CD8-positive, alpha-beta T cell (primary cell): ENCODE measurements at regions of chr1 and their contacts with region 1.

Region 1: DNA sequence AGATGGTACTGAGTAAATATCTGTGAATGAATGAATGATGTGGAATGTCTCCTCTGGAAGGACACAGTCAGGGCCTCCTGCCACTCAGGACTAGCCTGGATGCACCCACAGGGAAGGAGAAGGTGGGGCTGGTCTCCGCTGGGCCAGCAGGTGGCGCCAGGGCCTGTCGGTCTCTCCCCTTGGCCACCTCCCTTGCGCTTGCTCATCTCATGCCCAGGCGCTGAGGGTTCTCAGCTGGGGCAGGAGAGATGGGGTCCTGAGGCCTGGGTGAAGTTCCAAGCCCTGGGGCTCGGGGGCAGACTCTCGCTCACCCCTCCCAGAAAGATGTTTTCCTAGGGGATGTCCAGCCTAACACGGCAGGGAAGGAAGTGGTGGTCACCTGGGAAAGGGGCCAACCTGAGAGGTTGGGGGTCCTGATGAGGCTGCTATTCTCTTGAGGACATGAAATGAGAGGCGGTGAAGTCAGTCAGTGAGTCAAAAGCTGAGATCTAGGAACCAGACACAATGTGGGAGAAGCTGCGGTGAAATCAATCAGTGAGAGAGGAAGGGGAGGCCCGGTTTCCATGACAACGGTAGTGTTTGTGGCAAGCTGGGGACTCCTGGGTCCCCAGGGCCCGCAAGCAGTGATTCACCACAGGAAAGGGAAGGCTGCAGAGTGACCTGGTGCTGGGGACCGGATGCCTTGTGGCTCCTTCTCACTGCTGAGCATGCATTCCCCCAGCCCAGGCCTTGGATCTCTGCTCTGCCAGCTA is 14.6 kb upstream of the MEX3A start:
- DNase-seq: peak; percentile 72 to 97 (median 87)
- ATAC-seq: peak; percentile 82
- H3K4me3 ChIP-seq: peak overlapping the region in 1 of 2 experiments; percentile 7
- H3K4me3 Mint-ChIP-seq: peak overlapping the region; percentile 46
- H3K27ac ChIP-seq: peak overlapping the region; percentile 48 to 87
- H3K27ac Mint-ChIP-seq: peak overlapping the region; percentile 89
- H3K4me1 ChIP-seq: peaks cover 22% of the 10 kb centered on the region
- H3K4me1 Mint-ChIP-seq: peaks cover 26% of the 10 kb centered on the region
- H3K27me3 ChIP-seq: no peaks in the 10 kb centered on the region
- H3K27me3 Mint-ChIP-seq: peaks cover 2% of the 10 kb centered on the region
- CTCF ChIP-seq: peak; percentile 93

Region 2: GRCh38 chr1:156054500-156055280 is 42.1 kb before region 1 on chr1 and contains the start of gene LAMTOR2:
- CTCF ChIA-PET with region 1: no interaction called
- POLR2A ChIA-PET with region 1: no interaction called
- intact Hi-C with region 1: no loop called
- DNase-seq: peak; percentile 90 to 98 (median 94)
- ATAC-seq: peak; percentile 78
- H3K4me3 ChIP-seq: peak within 1 kb of the TSS; percentile 85 to 96
- H3K4me3 Mint-ChIP-seq: peak within 1 kb of the TSS; percentile 92
- H3K27ac ChIP-seq: peak within 1 kb of the TSS; percentile 54 to 79
- H3K27ac Mint-ChIP-seq: peak within 1 kb of the TSS; percentile 84
- H3K4me1 ChIP-seq: peaks cover 11% of the 10 kb centered on the region
- H3K4me1 Mint-ChIP-seq: peaks cover 31% of the 10 kb centered on the region
- H3K27me3 ChIP-seq: no peaks in the 10 kb centered on the region
- H3K27me3 Mint-ChIP-seq: no peaks in the 10 kb centered on the region
- CTCF ChIP-seq: no peak
- total RNA-seq, gene LAMTOR2: 6.7 to 8.3 TPM

Region 3: GRCh38 chr1:156075162-156075561 is 21.7 kb before region 1 on chr1:
- CTCF ChIA-PET with region 1: interaction called, 11 read pairs
- POLR2A ChIA-PET with region 1: no interaction called
- intact Hi-C with region 1: no loop called
- DNase-seq: no peak
- ATAC-seq: no peak
- H3K4me3 ChIP-seq: no peak overlapping the region
- H3K4me3 Mint-ChIP-seq: no peak overlapping the region
- H3K27ac ChIP-seq: no peak overlapping the region
- H3K27ac Mint-ChIP-seq: no peak overlapping the region
- H3K4me1 ChIP-seq: no peaks in the 10 kb centered on the region
- H3K4me1 Mint-ChIP-seq: peaks cover 3% of the 10 kb centered on the region
- H3K27me3 ChIP-seq: no peaks in the 10 kb centered on the region
- H3K27me3 Mint-ChIP-seq: no peaks in the 10 kb centered on the region
- CTCF ChIP-seq: no peak

Region 4: DNA sequence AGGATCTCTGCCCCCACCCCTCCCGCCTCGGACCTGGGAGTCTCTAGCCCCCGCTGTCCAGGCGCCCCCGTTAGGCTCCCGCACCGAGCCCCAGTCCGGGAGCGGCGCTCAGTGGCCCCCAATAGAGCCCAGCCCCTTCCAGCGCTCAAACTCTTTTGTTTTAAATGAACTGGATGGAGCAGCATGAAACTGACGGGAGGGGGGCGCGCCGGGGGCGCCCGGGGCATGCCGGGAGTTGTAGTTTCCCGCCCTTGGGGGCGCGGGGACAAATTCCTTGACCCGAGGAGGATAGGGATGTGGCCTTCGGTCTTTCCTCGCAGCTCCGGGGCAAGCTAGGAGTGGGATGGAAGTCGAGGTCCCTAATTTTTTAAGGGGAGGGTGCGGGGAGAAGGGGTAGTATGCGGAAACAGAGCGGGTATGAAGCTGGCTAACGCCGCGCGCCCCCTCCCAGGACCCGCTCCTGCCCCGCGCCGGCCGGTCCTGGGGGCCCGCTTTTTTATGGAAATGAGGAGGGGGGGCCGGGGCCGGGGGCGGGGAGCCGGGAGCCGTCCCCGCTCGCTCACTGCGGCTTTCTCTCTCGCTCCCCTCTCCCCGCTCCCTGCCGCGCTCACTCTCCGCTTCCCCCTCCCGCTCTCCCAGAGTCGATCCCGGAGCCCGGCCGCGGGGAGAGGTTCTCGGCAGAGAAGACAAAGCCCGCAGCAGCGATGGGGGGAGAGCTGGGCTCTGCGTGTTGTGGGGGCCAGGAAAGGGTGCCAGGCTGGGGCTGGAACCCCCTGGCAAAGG is 14.3 kb before region 1 on chr1 and contains the start of gene MEX3A:
- CTCF ChIA-PET with region 1: interaction called, 19 read pairs
- POLR2A ChIA-PET with region 1: no interaction called
- intact Hi-C with region 1: no loop called
- DNase-seq: peak in 8 of 9 experiments; percentile 39 to 73 (median 64)
- ATAC-seq: peak; percentile 90
- H3K4me3 ChIP-seq: peak within 1 kb of the TSS; percentile 65 to 88
- H3K4me3 Mint-ChIP-seq: peak within 1 kb of the TSS; percentile 87
- H3K27ac ChIP-seq: no peak within 1 kb of the TSS
- H3K27ac Mint-ChIP-seq: no peak within 1 kb of the TSS
- H3K4me1 ChIP-seq: peaks cover 13% of the 10 kb centered on the region
- H3K4me1 Mint-ChIP-seq: peaks cover 7% of the 10 kb centered on the region
- H3K27me3 ChIP-seq: peaks cover 3 to 25% of the 10 kb centered on the region in 2 experiments
- H3K27me3 Mint-ChIP-seq: peaks cover 29% of the 10 kb centered on the region
- CTCF ChIP-seq: no peak
- total RNA-seq, gene MEX3A: 0.14 to 0.22 TPM

Region 5: DNA sequence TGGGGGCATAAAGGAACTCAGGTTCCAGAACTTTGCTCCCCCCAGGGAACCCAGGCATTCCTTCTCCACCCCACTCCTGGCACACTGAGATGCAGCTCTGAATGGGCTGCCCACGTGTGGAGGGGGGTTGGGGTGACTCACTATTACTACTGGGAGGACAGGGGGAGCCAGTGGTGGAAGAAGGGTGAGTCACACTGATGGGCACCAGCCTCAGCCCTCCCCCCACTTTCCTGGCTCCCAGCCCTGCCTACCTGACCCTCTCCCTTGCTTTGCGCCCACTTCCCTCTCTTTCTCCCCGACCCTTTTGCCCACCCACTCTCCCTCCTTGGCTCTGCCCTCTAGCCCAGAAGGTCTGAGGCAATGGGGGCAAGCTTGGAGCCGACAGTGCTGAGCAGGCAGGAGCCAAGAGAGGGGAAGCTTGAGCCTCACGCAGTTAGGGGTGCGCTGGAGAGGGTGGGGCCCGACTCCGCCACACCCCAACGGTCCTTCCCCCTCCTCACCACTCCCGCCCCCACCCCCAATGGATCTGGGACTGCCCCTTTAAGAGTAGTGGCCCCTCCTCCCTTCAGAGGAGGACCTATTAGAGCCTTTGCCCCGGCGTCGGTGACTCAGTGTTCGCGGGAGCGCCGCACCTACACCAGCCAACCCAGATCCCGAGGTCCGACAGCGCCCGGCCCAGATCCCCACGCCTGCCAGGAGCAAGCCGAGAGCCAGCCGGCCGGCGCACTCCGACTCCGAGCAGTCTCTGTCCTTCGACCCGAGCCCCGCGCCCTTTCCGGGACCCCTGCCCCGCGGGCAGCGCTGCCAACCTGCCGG is 17.5 kb after region 1 on chr1 and contains the start of gene LMNA:
- CTCF ChIA-PET with region 1: interaction called, 1,057 read pairs
- POLR2A ChIA-PET with region 1: interaction called, 6 read pairs
- intact Hi-C with region 1: no loop called
- DNase-seq: peak; percentile 40 to 90 (median 77)
- ATAC-seq: peak; percentile 80
- H3K4me3 ChIP-seq: peak within 1 kb of the TSS; percentile 60 to 83
- H3K4me3 Mint-ChIP-seq: peak within 1 kb of the TSS; percentile 93
- H3K27ac ChIP-seq: peak within 1 kb of the TSS; percentile 7 to 68
- H3K27ac Mint-ChIP-seq: peak within 1 kb of the TSS; percentile 88
- H3K4me1 ChIP-seq: peaks cover 22% of the 10 kb centered on the region
- H3K4me1 Mint-ChIP-seq: peaks cover 26% of the 10 kb centered on the region
- H3K27me3 ChIP-seq: peaks cover 16 to 18% of the 10 kb centered on the region in 2 experiments
- H3K27me3 Mint-ChIP-seq: peaks cover 26% of the 10 kb centered on the region
- CTCF ChIP-seq: no peak
- total RNA-seq, gene LMNA: 281 to 298 TPM

Region 6: DNA sequence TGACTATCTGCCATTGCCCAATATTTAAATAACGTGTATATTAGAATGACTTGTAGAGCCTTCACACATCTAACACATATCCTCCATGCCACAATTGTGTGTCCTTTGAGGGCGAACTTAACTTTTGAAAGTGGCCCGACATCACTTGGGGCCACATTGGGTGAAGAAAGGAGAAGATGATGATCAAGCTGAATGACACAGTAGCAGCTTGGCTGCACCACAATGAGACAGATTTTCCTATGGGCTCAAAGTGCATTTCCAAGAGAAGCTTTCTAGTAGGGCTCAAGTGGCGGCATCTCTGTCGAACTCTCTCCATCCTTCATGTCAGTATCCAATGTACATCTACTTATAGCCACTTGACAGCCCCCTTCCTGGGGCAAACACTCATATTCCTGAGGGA is 141.4 kb after region 1 on chr1:
- CTCF ChIA-PET with region 1: no interaction called
- POLR2A ChIA-PET with region 1: no interaction called
- intact Hi-C with region 1: no loop called
- DNase-seq: no peak
- ATAC-seq: no peak
- H3K4me3 ChIP-seq: no peak overlapping the region
- H3K4me3 Mint-ChIP-seq: no peak overlapping the region
- H3K27ac ChIP-seq: no peak overlapping the region
- H3K27ac Mint-ChIP-seq: no peak overlapping the region
- H3K4me1 ChIP-seq: no peaks in the 10 kb centered on the region
- H3K4me1 Mint-ChIP-seq: no peaks in the 10 kb centered on the region
- H3K27me3 ChIP-seq: no peaks in the 10 kb centered on the region
- H3K27me3 Mint-ChIP-seq: no peaks in the 10 kb centered on the region
- CTCF ChIP-seq: no peak